Gastrocnemius medialis (tissue), 4 donors: ENCODE measurements at regions of chr12 and their contacts with region 1.

Region 1: GRCh38 chr12:39103552-39104165 is 198.3 kb upstream of the CPNE8 start:
- DNase-seq: no peak
- ATAC-seq: peak in 1 of 2 donors; percentile 52
- H3K4me3 ChIP-seq: no peak overlapping the region
- H3K27ac ChIP-seq: no peak overlapping the region
- H3K4me1 ChIP-seq: no peaks in the 10 kb centered on the region
- H3K27me3 ChIP-seq: no peaks in the 10 kb centered on the region
- CTCF ChIP-seq: peak; percentile 5 to 53 (median 41)
- POLR2A ChIP-seq: no peak

Region 2: DNA sequence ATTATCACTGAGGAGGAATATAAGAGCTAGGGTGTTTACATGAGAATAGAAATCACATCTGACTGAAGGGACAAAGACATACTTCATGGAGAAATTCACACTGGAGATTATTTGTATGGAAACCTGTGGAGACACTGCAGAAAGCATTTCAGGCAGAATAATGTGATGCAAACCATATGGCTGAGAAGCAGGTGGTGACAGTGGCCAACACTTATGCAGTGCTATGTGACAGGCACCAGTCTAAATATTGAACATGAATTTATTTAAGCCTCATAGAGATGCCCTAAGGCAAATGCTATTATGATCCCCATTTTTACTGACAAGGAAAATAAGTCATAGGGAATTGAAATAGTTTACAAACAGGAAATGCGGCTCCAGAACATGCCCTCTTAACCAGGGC is 770.8 kb before region 1 on chr12:
- in situ Hi-C with region 1: loop called in 3 of 4 experiments (anchors 25 kb)
- intact Hi-C with region 1: loop called (anchors 2 kb)
- DNase-seq: no peak
- ATAC-seq: no peak
- H3K4me3 ChIP-seq: no peak overlapping the region
- H3K27ac ChIP-seq: no peak overlapping the region
- H3K4me1 ChIP-seq: no peaks in the 10 kb centered on the region
- H3K27me3 ChIP-seq: no peaks in the 10 kb centered on the region
- CTCF ChIP-seq: no peak
- POLR2A ChIP-seq: no peak

Region 3: DNA sequence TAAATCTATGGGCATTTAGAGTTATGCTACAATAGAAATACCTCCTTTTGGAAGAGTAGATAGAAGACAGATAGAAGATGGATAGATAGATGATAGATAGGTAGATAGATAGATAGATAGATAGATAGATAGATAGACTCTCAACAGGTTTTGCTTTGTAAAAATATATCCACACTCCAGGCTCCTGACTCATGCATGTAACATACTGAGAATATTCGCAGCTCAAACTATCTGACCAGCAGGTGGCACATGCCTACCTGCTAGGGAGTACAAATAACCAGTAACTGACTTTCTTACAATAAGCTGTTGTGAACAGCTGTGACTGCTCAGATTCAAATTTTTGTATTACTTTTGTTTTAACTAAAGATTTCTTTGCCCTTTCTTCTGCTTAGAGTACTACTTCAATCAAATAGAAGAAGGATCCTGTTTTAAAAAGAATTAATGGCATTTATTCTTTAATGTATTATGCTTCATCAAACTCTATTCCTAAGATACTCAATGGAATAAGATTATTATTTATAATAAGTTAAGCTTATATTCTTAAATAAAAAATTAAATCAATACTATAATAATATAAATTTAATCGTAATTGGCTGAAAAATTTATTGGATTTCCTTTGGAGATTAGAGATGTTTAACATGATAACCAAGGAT is 182.5 kb before region 1 on chr12:
- in situ Hi-C with region 1: no loop called
- intact Hi-C with region 1: loop called (anchors 10 kb)
- DNase-seq: no peak
- ATAC-seq: no peak
- H3K4me3 ChIP-seq: no peak overlapping the region
- H3K27ac ChIP-seq: no peak overlapping the region
- H3K4me1 ChIP-seq: no peaks in the 10 kb centered on the region
- H3K27me3 ChIP-seq: no peaks in the 10 kb centered on the region
- CTCF ChIP-seq: peak in 1 of 5 experiments; percentile 15
- POLR2A ChIP-seq: no peak